Spleen (tissue), 13 donors: ENCODE measurements at regions of chr21 and their contacts with region 1.

Region 1: DNA sequence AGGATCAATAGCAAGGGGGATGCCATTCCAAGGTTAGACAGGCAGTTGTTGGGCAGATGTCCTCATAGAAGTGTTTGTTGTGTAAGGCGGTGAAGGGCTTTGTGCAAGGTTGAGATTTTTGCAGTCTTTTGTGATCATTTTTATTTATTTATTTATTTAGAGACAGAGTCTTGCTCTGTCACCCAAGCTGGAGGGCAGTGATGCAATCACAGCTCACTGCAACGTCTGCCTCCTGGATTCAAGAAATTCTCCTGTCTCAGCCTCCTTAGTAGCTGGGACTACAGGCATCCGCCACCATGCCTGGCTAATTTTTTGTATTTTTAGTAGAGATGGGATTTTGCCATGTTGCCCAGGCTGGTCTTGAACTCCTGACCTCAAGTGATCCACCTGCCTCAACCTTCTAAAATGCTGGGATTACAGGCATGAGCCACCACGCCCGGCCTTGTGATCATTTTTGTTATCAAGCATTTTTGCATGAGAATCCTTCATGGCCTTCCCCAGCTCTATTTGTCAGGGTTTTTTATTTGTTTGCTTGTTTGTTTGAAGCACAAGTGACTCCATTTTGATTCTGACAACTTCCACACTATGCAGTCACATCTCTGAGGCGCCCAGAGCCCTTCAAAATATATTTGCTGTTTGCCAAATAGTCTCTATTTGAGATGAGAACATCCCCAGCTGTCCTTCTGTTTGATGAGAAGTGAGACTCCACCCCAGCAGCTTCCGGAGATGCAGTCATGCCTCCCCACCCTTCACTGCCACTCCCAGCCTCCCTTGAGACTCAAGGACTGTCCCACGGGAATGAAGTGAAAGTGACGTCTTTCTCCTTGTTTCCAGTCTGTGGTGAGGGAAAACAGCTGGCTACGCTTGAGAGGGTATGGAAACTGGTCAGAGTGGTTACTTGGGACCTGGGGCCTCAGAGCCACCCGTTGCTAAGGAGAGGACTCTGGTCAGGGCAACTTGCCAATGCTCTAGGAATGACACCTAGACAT is 38.0 kb downstream of the TMEM50B start:
- DNase-seq: peak; percentile 78
- H3K4me3 ChIP-seq: no peak overlapping the region
- H3K27ac ChIP-seq: peak overlapping the region; percentile 42 to 80 (median 72)
- H3K4me1 ChIP-seq: peaks cover 7 to 50% (median 30%) of the 10 kb centered on the region in 6 donors
- H3K27me3 ChIP-seq: no peaks in the 10 kb centered on the region
- CTCF ChIP-seq: no peak
- POLR2A ChIP-seq: no peak

Region 2: DNA sequence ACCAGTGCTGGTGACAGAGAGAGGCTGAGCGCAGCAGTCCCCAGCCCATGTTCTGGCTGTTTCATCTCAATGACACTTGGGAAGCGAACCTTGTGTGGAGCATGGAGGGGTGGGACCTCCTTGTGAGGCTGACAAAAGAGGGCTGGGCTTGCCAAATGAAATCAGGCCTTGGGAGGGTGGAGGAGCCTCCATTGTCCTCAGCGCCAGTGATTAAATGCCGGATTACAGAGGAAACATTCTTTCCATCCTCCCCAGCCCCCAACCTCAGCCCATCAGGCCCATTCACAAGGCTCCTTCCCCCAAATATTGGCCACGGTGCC is 606.9 kb before region 1 on chr21:
- intact Hi-C with region 1: loop called (anchors 10 kb)
- DNase-seq: no peak
- H3K4me3 ChIP-seq: no peak overlapping the region
- H3K27ac ChIP-seq: no peak overlapping the region
- H3K4me1 ChIP-seq: peaks cover 0 to 6% (median 2%) of the 10 kb centered on the region in 6 donors
- H3K27me3 ChIP-seq: peaks cover 0 to 25% (median 0%) of the 10 kb centered on the region in 7 donors
- CTCF ChIP-seq: no peak
- POLR2A ChIP-seq: no peak

Region 3: DNA sequence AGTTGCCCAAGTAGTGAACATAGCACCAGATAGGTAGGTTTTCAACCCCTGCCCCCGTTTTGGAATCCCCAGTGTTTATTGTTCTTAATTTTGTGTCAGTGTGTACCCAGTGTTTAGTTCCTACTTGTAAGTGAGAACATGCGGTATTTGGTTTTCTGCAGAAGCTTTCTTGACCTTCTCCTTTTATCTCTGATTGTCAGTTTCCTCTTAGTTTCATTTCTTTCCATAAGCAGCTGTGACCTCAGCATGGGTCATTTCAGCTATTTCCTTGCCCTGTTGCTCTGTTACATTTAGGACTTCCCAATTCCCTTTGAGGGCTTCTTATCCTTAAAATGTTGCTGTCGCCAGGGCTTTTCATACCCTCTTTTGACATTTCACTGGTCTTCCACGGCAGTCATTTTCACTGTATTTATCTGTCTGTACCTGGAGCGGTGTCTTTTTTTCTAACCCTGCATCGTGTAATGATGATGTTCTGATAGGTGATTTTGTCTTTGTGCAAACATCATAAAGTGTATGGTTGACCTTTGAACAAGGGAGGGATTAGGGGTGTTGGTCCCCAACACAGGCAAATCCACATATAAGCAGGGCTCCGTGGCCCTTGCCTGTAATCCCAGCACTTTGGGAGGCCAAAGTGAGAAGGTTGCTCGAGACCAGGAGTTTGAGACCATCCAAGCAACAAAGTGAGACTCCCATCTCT is 215.5 kb after region 1 on chr21:
- intact Hi-C with region 1: no loop called
- DNase-seq: no peak
- H3K4me3 ChIP-seq: no peak overlapping the region
- H3K27ac ChIP-seq: peak overlapping the region; percentile 5 to 84 (median 74)
- H3K4me1 ChIP-seq: peaks cover 14 to 59% (median 35%) of the 10 kb centered on the region in 6 donors
- H3K27me3 ChIP-seq: no peaks in the 10 kb centered on the region
- CTCF ChIP-seq: no peak
- POLR2A ChIP-seq: no peak